Caco-2 (cell line): ENCODE measurements at regions of chr6 and their contacts with region 1.

Region 1: DNA sequence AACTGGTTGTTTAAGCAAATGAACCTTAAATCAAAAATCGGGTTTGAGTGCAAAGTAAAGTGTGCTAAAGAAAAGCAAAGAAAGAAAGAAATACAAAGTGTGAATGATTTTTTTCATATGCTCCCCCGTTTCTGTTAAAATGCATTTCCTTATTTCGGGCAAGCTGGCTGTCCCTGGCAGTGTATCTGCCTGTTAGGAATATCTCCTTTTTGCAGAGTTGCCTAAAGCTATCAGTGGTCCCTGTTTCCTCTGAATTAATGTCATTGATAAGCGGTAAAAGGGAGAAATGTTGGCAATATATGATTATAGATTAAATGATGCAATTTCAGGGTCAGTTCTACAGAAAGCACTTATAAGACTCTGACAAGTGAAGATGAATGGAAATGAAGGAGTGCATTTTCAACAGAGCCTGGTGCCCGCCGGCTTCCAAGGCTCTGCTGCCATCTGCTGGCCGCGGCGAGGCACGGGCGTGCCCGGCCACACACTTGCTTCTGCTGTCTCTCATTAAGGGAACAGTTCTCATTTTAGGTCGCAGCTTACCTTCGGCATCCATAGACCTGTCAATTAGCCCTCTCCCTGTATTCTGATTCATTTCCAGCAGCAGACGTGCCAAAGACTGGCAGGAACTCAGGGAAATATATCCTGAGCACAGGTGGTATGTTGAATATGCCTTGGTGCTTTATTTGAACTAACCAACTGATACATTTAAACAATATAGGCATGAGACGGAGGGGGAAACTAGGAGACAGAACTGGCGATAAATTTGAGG is 381.9 kb downstream of the C6orf118 start:
- DNase-seq: peak; percentile 42 to 76
- H3K4me3 ChIP-seq: no peak overlapping the region
- H3K4me3 Mint-ChIP-seq: no peak overlapping the region
- H3K27ac Mint-ChIP-seq: no peak overlapping the region
- H3K4me1 ChIP-seq: no peaks in the 10 kb centered on the region
- H3K4me1 Mint-ChIP-seq: no peaks in the 10 kb centered on the region
- H3K27me3 ChIP-seq: no peaks in the 10 kb centered on the region
- H3K27me3 Mint-ChIP-seq: no peaks in the 10 kb centered on the region
- CTCF ChIP-seq: peak; percentile 86 to 95

Region 2: GRCh38 chr6:163427498-163428254 is 1499.8 kb before region 1 on chr6:
- CTCF ChIA-PET with region 1: no interaction called
- POLR2A ChIA-PET with region 1: no interaction called
- intact Hi-C with region 1: loop called (anchors 10 kb)
- DNase-seq: no peak
- H3K4me3 ChIP-seq: no peak overlapping the region
- H3K4me3 Mint-ChIP-seq: no peak overlapping the region
- H3K27ac Mint-ChIP-seq: no peak overlapping the region
- H3K4me1 ChIP-seq: peaks cover 16% of the 10 kb centered on the region
- H3K4me1 Mint-ChIP-seq: peaks cover 14% of the 10 kb centered on the region
- H3K27me3 ChIP-seq: no peaks in the 10 kb centered on the region
- H3K27me3 Mint-ChIP-seq: no peaks in the 10 kb centered on the region
- CTCF ChIP-seq: peak; percentile 5 to 23

Region 3: DNA sequence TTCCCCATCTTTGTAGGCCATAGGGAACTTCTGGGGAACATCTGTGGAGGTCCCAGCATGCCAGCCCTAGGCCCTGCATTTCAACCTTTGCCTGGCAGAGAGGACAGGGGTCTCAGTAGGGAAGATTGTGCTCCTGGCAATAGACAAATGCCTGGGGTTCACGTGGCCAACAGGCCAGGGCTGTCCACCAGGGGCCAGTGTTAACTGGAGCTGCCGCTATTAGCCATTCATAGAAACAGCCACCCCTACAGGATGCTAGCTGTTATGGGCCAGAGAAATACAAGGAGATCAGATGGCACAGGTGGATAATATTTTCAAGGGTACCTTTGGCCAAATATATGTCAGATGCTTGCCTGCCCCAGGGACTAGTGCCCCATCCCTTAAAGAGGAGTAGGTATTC is 580.0 kb before region 1 on chr6:
- CTCF ChIA-PET with region 1: no interaction called
- POLR2A ChIA-PET with region 1: no interaction called
- intact Hi-C with region 1: loop called (anchors 1 kb)
- DNase-seq: no peak
- H3K4me3 ChIP-seq: no peak overlapping the region
- H3K4me3 Mint-ChIP-seq: no peak overlapping the region
- H3K27ac Mint-ChIP-seq: no peak overlapping the region
- H3K4me1 ChIP-seq: no peaks in the 10 kb centered on the region
- H3K4me1 Mint-ChIP-seq: no peaks in the 10 kb centered on the region
- H3K27me3 ChIP-seq: no peaks in the 10 kb centered on the region
- H3K27me3 Mint-ChIP-seq: peaks cover 3% of the 10 kb centered on the region
- CTCF ChIP-seq: no peak

Region 4: DNA sequence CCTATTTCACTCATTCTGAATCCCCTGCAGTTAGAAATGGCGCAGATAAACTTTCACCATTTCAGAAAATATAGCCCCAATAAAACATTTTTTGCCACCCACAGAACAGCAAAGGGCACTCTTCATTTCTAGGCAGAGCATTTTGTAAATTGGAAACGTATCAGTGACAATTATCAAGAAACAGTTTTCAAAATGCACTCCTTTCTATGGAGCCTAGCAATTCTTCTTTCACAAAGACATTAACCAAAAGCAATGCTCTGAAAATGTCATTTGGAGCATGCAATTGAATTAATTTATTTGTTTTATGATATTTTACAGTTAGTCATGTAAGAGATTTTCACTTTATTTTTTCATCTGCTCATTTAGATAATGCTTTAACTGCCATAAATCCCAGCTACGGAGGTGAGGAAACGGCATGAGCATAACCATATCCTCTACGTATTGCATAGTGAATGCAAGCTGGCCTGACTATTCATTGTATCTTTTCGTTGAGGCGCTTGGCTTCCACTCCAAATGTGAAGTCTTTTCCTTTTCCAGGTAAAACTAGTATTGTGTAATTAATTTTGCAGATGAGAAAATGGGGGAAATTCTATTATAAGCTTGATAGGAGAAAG is 431.5 kb before region 1 on chr6:
- CTCF ChIA-PET with region 1: no interaction called
- POLR2A ChIA-PET with region 1: no interaction called
- intact Hi-C with region 1: loop called (anchors 10 kb)
- DNase-seq: no peak
- H3K4me3 ChIP-seq: no peak overlapping the region
- H3K4me3 Mint-ChIP-seq: no peak overlapping the region
- H3K27ac Mint-ChIP-seq: no peak overlapping the region
- H3K4me1 ChIP-seq: no peaks in the 10 kb centered on the region
- H3K4me1 Mint-ChIP-seq: no peaks in the 10 kb centered on the region
- H3K27me3 ChIP-seq: no peaks in the 10 kb centered on the region
- H3K27me3 Mint-ChIP-seq: peaks cover 4% of the 10 kb centered on the region
- CTCF ChIP-seq: no peak

Region 5: DNA sequence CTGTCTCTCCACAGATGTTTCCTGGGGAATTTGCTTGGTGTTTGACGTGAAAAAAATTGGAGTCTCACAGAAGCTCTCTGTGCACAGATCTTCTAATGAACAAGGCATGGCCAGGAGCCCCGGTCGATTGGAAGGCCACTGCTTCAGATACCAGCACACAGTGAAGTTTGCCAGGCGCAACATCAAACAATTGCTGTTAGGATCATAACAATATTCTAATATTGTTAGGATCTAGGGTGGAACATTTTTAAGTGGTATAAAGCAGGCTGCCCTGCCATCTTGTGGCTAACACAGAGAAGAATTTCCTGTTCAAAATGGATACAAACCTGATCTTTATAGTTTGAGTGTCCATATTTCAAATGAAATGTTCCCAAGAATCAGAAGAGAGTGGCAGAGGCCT is 317.8 kb after region 1 on chr6:
- CTCF ChIA-PET with region 1: no interaction called
- POLR2A ChIA-PET with region 1: no interaction called
- intact Hi-C with region 1: loop called (anchors 1 kb)
- DNase-seq: peak in 1 of 2 experiments; percentile 15
- H3K4me3 ChIP-seq: no peak overlapping the region
- H3K4me3 Mint-ChIP-seq: no peak overlapping the region
- H3K27ac Mint-ChIP-seq: no peak overlapping the region
- H3K4me1 ChIP-seq: no peaks in the 10 kb centered on the region
- H3K4me1 Mint-ChIP-seq: no peaks in the 10 kb centered on the region
- H3K27me3 ChIP-seq: no peaks in the 10 kb centered on the region
- H3K27me3 Mint-ChIP-seq: peaks cover 9% of the 10 kb centered on the region
- CTCF ChIP-seq: peak; percentile 30 to 34